ENCODE measurements at regions of chr5 and their contacts with region 1.

Region 1: DNA sequence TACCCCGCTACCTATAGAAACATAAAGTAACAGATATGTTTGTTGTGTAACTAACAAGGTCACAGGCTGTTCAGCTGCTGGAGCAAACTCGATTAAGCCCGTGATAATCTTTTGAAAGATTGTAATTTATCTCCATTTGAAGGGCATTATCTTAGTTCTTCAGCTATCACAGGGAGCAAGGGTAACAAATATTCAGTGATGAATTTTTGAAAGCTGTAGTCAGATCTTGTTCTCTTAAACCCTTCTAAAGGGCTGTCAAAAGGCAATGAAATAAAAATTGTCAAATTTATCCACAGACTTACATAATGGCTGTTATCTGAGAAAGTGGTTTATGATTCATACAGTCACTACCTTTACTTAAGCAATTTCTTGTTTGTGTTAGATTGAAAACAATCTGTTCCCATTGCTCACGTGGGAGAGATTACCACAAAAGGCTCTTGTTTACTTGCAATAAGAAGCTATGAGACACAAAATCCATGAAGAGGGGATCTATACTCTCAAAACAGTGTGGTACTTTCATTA is 78.3 kb upstream of the ZNF608 start:
- DNase-seq: peak in 1 of 2 donors; percentile 37
- ATAC-seq: peak; percentile 94 to 96
- H3K4me3 ChIP-seq: no peak overlapping the region
- H3K27ac ChIP-seq: peak overlapping the region in 3 of 4 donors; percentile 34 to 72 (median 51)
- H3K4me1 ChIP-seq: peaks cover 3 to 4% of the 10 kb centered on the region in 2 donors
- H3K27me3 ChIP-seq: no peaks in the 10 kb centered on the region
- CTCF ChIP-seq: peak in 1 of 5 experiments; percentile 8
- POLR2A ChIP-seq: no peak

Region 2: DNA sequence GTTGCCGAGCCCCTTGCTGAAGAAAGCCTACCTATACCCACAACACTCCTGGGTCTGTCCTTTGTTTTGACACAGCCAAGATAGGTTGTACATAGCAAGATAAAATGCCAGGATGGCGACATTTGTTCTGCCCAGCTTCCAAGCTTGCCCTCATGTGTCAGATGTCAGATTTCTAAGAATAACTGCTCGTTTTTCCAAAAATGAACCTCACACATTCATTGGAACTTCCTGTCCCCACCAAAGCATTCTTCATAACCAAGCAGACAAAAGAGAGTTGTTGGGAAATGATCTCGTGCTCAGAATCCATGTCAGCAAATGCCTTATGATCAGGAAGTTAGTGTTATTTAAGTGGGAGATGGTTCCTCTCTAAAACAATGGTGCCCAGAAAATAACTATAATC is 288.4 kb before region 1 on chr5:
- in situ Hi-C with region 1: no loop called
- intact Hi-C with region 1: loop called (anchors 10 kb)
- DNase-seq: peak; percentile 20 to 43
- ATAC-seq: peak; percentile 84 to 89
- H3K4me3 ChIP-seq: no peak overlapping the region
- H3K27ac ChIP-seq: peak overlapping the region; percentile 1 to 74 (median 50)
- H3K4me1 ChIP-seq: peaks cover 6 to 25% of the 10 kb centered on the region in 2 donors
- H3K27me3 ChIP-seq: no peaks in the 10 kb centered on the region
- CTCF ChIP-seq: no peak
- POLR2A ChIP-seq: no peak

Region 3: DNA sequence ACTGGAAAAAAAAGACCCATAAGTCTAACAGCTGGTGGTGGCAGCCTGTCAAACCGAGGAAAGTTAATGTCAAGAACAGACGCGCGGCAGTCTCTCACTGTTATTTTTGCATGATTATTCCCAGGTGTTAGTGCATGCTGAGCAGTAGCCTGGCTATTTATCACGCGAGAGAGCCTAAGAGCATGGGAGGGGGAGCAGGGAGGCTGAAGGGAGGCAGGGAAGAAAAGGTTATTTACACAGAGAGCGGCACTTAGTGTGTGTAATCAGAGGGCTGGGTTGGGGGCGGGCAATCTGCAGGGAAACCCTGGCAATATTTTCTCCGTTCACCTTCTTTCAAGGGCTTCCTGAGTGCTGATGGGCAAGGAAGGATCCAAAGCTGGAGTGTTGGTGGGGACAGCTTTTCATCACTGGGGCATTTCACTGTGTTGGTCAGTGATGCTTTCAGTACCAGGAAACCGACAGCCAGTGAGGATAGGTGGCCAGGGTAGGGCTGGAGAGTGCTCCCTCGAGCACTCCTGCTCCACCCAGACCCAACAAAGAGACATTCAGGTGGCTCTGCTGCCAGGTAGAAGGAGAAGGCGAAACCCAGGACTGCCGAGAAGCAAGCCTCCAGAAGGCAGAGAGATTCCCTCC is 117.9 kb before region 1 on chr5:
- in situ Hi-C with region 1: no loop called
- intact Hi-C with region 1: no loop called
- DNase-seq: no peak
- ATAC-seq: peak in 1 of 2 donors; percentile 35
- H3K4me3 ChIP-seq: peak overlapping the region in 3 of 4 donors; percentile 6 to 16 (median 7)
- H3K27ac ChIP-seq: no peak overlapping the region
- H3K4me1 ChIP-seq: peaks cover 62% of the 10 kb centered on the region in 2 donors
- H3K27me3 ChIP-seq: no peaks in the 10 kb centered on the region
- CTCF ChIP-seq: no peak
- POLR2A ChIP-seq: no peak

Region 4: DNA sequence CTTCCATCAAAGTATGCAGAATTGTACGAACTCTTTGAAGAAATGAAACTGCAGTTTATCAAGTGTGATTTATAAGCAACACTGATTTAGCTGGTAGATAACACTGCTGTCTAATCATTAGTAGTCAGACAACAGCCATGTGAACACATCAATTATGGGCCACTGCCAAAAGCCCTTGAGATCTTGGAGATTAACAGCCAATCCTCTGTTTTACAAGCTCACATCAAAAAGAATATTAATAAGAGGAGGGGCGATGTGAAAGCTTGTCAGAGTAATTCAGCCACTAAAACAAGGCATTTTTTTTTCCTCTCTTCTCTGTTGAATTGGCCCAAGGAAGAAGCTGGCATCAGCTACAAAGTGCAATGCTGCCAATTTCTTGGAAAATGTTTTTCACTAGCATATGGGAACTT is 106.3 kb before region 1 on chr5:
- in situ Hi-C with region 1: no loop called
- intact Hi-C with region 1: no loop called
- DNase-seq: no peak
- ATAC-seq: no peak
- H3K4me3 ChIP-seq: no peak overlapping the region
- H3K27ac ChIP-seq: no peak overlapping the region
- H3K4me1 ChIP-seq: peaks cover 40 to 44% of the 10 kb centered on the region in 2 donors
- H3K27me3 ChIP-seq: no peaks in the 10 kb centered on the region
- CTCF ChIP-seq: no peak
- POLR2A ChIP-seq: no peak

Region 5: GRCh38 chr5:124995421-124995820 is 170.7 kb after region 1 on chr5:
- in situ Hi-C with region 1: no loop called
- intact Hi-C with region 1: no loop called
- DNase-seq: no peak
- ATAC-seq: no peak
- H3K4me3 ChIP-seq: no peak overlapping the region
- H3K27ac ChIP-seq: no peak overlapping the region
- H3K4me1 ChIP-seq: no peaks in the 10 kb centered on the region
- H3K27me3 ChIP-seq: no peaks in the 10 kb centered on the region
- CTCF ChIP-seq: no peak
- POLR2A ChIP-seq: no peak